PC-3 (cell line): ENCODE measurements at regions of chr1 and their contacts with region 1.

Region 1: DNA sequence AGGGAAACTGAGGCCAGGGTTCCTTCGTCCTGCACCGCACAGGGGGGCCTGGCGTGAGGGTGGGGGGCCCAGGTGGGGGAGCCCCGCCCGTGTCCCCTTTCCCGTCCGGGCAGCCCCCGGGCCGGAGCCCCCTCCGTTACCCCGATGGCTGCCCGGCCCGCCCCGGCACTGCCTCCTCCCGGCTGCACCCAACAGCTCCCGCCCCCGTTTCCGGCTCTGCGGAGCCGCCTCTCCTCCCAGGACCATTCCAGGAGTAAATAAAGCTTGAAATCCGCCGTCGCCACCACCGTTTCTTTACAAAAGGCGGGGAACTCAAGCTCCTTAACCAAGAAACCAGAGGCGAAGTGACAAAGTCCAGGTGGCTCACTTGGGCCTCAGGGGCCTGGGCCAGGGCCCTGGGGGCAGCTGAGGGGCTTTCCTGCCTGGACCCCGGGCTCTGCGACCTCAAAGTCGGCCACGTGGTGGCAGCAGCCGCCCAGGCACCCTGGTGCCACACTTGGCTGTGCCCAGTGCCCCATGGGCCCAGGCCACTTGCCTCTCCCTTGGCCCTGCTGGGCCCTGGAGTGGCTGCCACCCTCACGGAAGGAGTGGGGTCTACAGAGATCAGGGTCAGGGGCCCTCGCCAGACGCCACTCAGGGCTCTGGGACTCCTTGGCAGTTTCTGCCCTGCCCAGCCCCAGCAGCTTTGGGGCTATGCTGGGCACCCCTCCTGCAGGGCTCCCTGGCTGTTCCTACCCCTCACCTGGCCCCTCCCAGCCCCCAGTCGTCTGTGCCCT is 514 bp upstream of the FAAP20 start:
- DNase-seq: peak; percentile 92
- ATAC-seq: peak; percentile 62
- H3K4me3 ChIP-seq: peak overlapping the region; percentile 61
- H3K27ac ChIP-seq: peak overlapping the region; percentile 23
- H3K4me1 ChIP-seq: peaks cover 58% of the 10 kb centered on the region
- H3K27me3 ChIP-seq: no peaks in the 10 kb centered on the region
- CTCF ChIP-seq: peak; percentile 99

Region 2: DNA sequence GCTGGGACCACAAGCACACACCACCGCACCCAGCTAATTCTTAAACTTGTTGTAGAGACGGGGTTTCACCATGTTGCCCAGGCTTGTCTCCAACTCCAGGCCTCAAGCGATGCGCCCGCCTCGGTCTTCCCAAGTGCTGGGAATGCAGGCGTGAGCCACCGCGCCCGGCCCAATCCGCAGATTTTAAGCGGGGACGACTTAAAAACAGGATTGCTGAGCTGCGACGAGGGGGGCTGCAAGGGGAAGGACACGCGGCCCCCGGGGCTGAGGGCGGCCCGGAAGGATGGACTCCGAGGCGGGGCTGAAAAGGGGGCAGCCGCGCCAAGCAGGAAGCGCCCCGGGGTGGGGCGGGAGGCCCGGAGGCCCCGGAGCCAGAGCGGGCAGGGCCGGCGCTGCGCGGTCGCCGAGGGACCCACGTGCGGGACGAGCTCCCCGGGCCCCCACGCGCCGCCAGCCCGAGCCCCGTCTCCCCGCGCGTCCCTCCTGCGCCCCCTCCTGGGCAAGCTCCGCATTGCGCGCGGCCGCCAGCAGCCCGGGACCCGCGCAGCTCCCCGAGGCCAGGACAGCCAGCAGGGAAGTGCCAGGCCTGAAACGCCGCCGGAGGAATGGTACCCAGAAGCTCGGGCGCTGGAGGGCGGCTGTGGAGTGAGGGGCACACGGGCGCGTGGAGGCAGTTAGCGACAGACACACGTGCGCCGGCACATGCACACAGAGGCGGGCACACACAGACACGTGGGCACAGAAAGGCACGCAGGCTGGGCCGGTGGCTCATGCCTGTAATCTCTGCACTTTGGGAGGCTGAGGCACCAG is 150.4 kb before region 1 on chr1:
- CTCF ChIA-PET with region 1: no interaction called
- POLR2A ChIA-PET with region 1: no interaction called
- intact Hi-C with region 1: no loop called
- DNase-seq: peak; percentile 85
- ATAC-seq: peak; percentile 54
- H3K4me3 ChIP-seq: peak overlapping the region; percentile 53
- H3K27ac ChIP-seq: no peak overlapping the region
- H3K4me1 ChIP-seq: peaks cover 18% of the 10 kb centered on the region
- H3K27me3 ChIP-seq: no peaks in the 10 kb centered on the region
- CTCF ChIP-seq: peak; percentile 80

Region 3: GRCh38 chr1:2205191-2205952 is 10.3 kb after region 1 on chr1:
- CTCF ChIA-PET with region 1: interaction called, 5 read pairs
- POLR2A ChIA-PET with region 1: interaction called, 9 read pairs
- intact Hi-C with region 1: loop called (anchors 2 kb)
- DNase-seq: peak; percentile 93
- ATAC-seq: peak; percentile 31
- H3K4me3 ChIP-seq: peak overlapping the region; percentile 64
- H3K27ac ChIP-seq: no peak overlapping the region
- H3K4me1 ChIP-seq: peaks cover 40% of the 10 kb centered on the region
- H3K27me3 ChIP-seq: no peaks in the 10 kb centered on the region
- CTCF ChIP-seq: no peak

Region 4: GRCh38 chr1:2233997-2234761 is 39.1 kb after region 1 on chr1:
- CTCF ChIA-PET with region 1: interaction called, 4 read pairs
- POLR2A ChIA-PET with region 1: interaction called, 10 read pairs
- intact Hi-C with region 1: loop called (anchors 5 kb)
- DNase-seq: peak; percentile 32
- ATAC-seq: no peak
- H3K4me3 ChIP-seq: no peak overlapping the region
- H3K27ac ChIP-seq: no peak overlapping the region
- H3K4me1 ChIP-seq: peaks cover 32% of the 10 kb centered on the region
- H3K27me3 ChIP-seq: no peaks in the 10 kb centered on the region
- CTCF ChIP-seq: no peak

Region 5: DNA sequence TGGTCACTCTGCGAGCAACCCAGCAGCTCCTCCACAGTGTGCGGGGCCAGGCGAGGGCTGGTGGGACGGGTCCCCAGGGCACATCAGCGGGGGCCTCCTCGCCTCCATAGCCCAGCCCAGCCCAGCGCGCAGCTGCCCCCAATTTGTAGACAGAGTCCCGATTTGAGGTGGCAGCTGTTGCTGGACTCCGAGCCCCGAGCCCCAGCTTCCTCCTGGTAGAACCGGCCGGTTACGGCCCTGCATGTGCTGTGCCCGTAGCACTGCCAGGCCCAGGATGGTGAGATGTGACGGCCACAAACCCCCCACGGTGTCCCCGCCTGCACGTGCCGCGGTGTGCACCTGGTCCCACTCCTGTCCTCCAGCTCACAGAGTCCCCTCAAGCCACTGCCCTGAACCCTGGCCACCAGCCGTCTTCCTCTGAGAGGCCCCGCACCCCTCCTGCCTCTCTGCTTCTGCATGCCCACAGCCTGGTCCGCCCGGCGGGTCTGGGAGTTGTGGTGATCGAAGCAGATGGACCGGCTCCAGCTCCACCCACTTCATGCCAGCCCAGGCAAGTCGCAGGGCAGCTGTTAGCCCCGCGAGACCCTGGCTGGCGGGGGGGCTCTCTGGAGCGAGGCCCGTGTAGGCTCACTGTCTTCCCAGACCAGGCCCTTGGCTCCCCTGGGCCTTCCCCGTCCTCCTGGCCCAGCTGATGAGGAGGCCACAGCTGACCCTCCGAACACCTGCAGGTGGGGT is 140.8 kb after region 1 on chr1:
- CTCF ChIA-PET with region 1: no interaction called
- POLR2A ChIA-PET with region 1: no interaction called
- intact Hi-C with region 1: loop called (anchors 1 kb)
- DNase-seq: no peak
- ATAC-seq: no peak
- H3K4me3 ChIP-seq: no peak overlapping the region
- H3K27ac ChIP-seq: no peak overlapping the region
- H3K4me1 ChIP-seq: peaks cover 18% of the 10 kb centered on the region
- H3K27me3 ChIP-seq: no peaks in the 10 kb centered on the region
- CTCF ChIP-seq: no peak

Region 6: DNA sequence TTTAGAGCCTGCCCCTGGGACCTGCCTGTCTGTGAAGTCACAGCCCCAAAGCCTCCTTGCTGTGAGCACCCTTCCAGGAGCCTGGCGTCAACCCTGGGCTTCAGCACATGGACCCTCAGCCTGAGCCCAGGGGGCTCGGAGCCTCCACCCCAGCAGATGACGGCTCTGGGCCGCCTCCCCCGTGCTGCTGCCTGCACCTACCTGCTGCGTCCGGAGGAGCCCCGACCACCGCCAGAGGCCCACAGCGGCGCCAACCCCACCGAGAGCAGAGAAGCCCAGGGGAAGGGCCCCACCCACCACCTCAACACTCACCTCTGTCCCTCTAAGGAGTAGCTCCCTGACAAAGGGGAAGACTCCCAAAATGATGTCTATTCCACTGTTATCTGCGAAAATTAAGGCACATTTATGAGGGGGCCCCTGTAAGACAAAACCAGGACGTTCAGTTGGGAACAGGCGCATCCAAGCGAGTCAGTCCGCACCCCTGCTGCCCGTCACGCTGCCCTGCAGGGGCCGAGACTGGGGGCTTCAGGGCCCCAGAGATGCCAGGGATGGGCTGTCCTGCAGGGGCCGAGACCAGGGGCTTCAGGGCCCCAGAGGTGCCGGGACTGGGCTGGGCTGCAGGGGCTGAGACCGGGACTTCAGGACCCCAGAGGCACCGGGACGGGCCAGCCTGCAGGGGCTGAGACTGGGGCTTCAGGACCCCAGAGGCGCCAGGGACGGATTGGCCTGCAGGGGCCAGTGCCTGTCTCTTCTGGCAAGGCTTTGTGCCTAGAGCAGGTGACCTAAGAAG is 315.5 kb after region 1 on chr1:
- CTCF ChIA-PET with region 1: no interaction called
- POLR2A ChIA-PET with region 1: interaction called, 16 read pairs
- intact Hi-C with region 1: no loop called
- DNase-seq: no peak
- ATAC-seq: no peak
- H3K4me3 ChIP-seq: no peak overlapping the region
- H3K27ac ChIP-seq: no peak overlapping the region
- H3K4me1 ChIP-seq: no peaks in the 10 kb centered on the region
- H3K27me3 ChIP-seq: no peaks in the 10 kb centered on the region
- CTCF ChIP-seq: no peak

Region 7: GRCh38 chr1:2571348-2571747 is 376.3 kb after region 1 on chr1:
- CTCF ChIA-PET with region 1: no interaction called
- POLR2A ChIA-PET with region 1: interaction called, 22 read pairs
- intact Hi-C with region 1: no loop called
- DNase-seq: no peak
- ATAC-seq: no peak
- H3K4me3 ChIP-seq: no peak overlapping the region
- H3K27ac ChIP-seq: no peak overlapping the region
- H3K4me1 ChIP-seq: no peaks in the 10 kb centered on the region
- H3K27me3 ChIP-seq: peaks cover 31% of the 10 kb centered on the region
- CTCF ChIP-seq: no peak